ENCODE measurements at regions of chr9 and their contacts with region 1.

Region 1: GRCh38 chr9:34084562-34084961 is 35.9 kb upstream of the UBAP2 start:
- DNase-seq: no peak
- ATAC-seq: no peak
- H3K4me3 ChIP-seq: no peak overlapping the region
- H3K27ac ChIP-seq: no peak overlapping the region
- H3K4me1 ChIP-seq: no peaks in the 10 kb centered on the region
- H3K27me3 ChIP-seq: no peaks in the 10 kb centered on the region
- CTCF ChIP-seq: no peak
- EP300 ChIP-seq: no peak
- POLR2A ChIP-seq: no peak
- RAD21 ChIP-seq: no peak

Region 2: DNA sequence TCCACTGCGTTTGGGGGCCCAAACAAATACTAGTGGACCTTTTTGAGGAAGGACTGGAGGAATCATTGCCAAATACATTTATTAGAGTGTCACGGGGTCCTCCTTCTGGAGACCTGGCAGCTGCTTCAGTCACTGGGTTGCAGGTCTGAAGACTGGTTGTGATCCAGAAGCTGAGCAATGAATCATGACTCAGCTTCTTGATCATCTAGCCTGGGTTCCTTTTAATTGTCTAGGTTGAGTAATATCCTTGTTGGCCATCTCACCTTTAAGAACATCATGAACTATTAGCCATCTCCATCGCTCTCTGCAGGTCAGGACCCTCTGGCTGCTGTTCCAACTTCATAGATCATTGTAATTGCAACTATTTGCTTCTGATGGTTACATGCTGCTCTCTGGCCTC is 78.9 kb after region 1 on chr9:
- CTCF ChIA-PET with region 1: no interaction called
- POLR2A ChIA-PET with region 1: no interaction called
- in situ Hi-C with region 1: loop called (anchors 5 kb)
- intact Hi-C with region 1: no loop called
- DNase-seq: peak in 1 of 4 experiments; percentile 13
- ATAC-seq: no peak
- H3K4me3 ChIP-seq: no peak overlapping the region
- H3K27ac ChIP-seq: no peak overlapping the region
- H3K4me1 ChIP-seq: peaks cover 0 to 14% of the 10 kb centered on the region in 2 experiments; a peak in 4 of 5 replicates
- H3K27me3 ChIP-seq: no peaks in the 10 kb centered on the region
- CTCF ChIP-seq: no peak
- EP300 ChIP-seq: no peak
- POLR2A ChIP-seq: no peak
- RAD21 ChIP-seq: no peak

Measured in K562 (cell line).